ENCODE measurements at regions of chr19 and their contacts with region 1.

Region 1: GRCh38 chr19:49766007-49766937 is 529 bp upstream of the AP2A1 start:
- DNase-seq: peak; percentile 100
- ATAC-seq: peak; percentile 96
- H3K4me3 ChIP-seq: peak overlapping the region; percentile 89
- H3K27ac ChIP-seq: peak overlapping the region; percentile 89
- H3K4me1 ChIP-seq: peaks cover 15% of the 10 kb centered on the region; the same call in 1 of the 2 replicates
- H3K27me3 ChIP-seq: no peaks in the 10 kb centered on the region; a peak in 1 of 4 replicates
- CTCF ChIP-seq: no peak
- EP300 ChIP-seq: no peak
- POLR2A ChIP-seq: peak; percentile 88
- RAD21 ChIP-seq: no peak

Region 2: GRCh38 chr19:49808711-49809159 is 42.5 kb after region 1 on chr19:
- CTCF ChIA-PET with region 1: no interaction called
- POLR2A ChIA-PET with region 1: interaction called, 5 read pairs
- RAD21 ChIA-PET with region 1: no interaction called
- SMC1A ChIA-PET with region 1: interaction called, 5 read pairs
- in situ Hi-C with region 1: no loop called
- intact Hi-C with region 1: loop called (anchors 5 kb)
- DNase-seq: no peak
- ATAC-seq: peak; percentile 67
- H3K4me3 ChIP-seq: peak overlapping the region; percentile 60; the same call in 1 of the 2 replicates
- H3K27ac ChIP-seq: no peak overlapping the region
- H3K4me1 ChIP-seq: peaks cover 7% of the 10 kb centered on the region; the same call in 1 of the 2 replicates
- H3K27me3 ChIP-seq: no peaks in the 10 kb centered on the region
- CTCF ChIP-seq: no peak
- EP300 ChIP-seq: no peak
- POLR2A ChIP-seq: no peak; the same call in none of the 2 replicates
- RAD21 ChIP-seq: no peak

Measured in GM12878 (cell line).